ENCODE measurements at regions of chr22 and their contacts with region 1.

Region 1: GRCh38 chr22:30005213-30005857 is 74.9 kb upstream of the HORMAD2 start:
- DNase-seq: peak; percentile 55
- ATAC-seq: peak; percentile 87 to 88

Region 2: DNA sequence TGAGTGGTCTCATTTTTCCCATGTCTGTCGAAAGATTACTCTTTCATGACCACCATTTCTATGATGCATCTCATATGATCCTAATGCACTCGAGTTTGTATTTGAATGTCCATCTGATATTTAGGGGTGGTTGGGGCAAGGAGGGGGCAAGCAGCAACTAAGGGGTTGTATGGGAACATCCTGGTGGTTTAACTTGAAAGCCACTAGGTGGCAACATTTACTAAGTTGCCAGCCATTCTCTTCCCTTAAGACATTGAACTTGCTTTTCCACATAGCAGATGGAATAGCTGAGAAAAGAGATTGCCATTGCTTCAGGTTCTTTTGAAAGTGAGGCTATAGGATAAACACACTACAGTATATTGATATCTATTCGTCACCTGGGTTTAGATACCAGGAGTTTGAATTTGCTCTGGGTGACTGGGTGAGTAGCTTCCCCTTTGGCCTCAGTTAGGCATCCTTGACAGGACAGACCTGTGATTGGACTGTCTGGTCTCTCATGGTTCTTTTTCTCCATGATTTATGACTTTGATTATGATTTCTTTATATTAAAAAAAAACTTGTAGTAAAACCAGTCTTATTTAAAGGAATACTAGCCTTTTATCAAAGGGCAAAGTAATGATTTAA is 369.5 kb before region 1 on chr22:
- intact Hi-C with region 1: loop called in 1 of 2 experiments (anchors 5 kb)
- DNase-seq: no peak
- ATAC-seq: peak; percentile 38 to 61

Region 3: DNA sequence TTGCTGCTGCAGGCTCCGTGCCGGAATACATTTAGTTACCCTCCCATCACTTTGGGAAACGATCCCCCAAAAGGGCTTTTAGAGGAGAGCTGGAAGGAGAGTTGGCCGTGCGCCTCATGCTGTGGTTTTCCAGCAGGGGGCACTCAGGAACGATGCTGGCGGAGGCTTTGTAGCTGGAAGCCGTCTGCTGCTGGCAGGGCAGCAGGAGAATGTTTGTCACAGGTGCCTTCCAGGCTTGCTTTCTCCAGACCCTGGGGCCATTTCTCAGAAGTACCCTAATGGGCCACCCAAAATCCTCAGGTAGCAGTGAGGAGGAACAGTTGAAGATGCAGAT is 315.5 kb before region 1 on chr22:
- intact Hi-C with region 1: loop called in 1 of 2 experiments (anchors 10 kb)
- DNase-seq: peak; percentile 58
- ATAC-seq: peak; percentile 54 to 66

Region 4: DNA sequence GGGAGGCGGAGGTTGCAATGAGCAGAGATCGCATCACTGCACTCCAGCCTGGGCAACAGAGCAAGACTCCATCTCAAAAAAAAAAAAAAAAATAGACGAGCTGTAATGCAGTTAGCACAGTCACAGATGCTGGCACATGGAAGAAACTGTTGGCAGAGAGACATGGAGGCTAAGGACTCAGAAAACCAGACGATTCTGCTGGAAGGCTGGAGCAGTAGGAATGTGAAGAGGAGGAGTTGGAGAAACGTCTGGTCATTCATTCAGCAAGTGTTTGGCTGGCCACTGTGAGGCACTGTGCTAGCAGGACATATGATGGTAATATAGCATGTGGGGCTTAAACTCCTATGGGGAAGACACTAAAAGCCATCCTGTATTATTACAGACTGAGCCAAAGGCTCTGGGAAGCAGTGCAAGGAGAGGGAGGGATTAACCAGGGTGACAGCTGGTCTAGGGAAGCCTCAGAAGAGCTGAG is 233.1 kb before region 1 on chr22:
- intact Hi-C with region 1: loop called in 1 of 2 experiments (anchors 10 kb)
- DNase-seq: no peak
- ATAC-seq: peak; percentile 27 to 50

Region 5: GRCh38 chr22:29883045-29883774 is 122.1 kb before region 1 on chr22 and contains the start of gene MTMR3:
- intact Hi-C with region 1: loop called in 1 of 2 experiments (anchors 10 kb)
- DNase-seq: peak; percentile 95
- ATAC-seq: peak; percentile 93 to 96
- total RNA-seq, gene MTMR3: 29.8 to 34.8 TPM

Measured in left cardiac atrium (tissue), 4 donors.